Endothelial cell of umbilical vein (primary cell): ENCODE measurements at regions of chr2 and their contacts with region 1.

Region 1: GRCh38 chr2:54106631-54107454 is 8.6 kb upstream of the ACYP2 start:
- DNase-seq: peak; percentile 69
- H3K4me3 ChIP-seq: no peak overlapping the region
- H3K27ac ChIP-seq: no peak overlapping the region
- H3K4me1 ChIP-seq: peaks cover 11% of the 10 kb centered on the region
- H3K27me3 ChIP-seq: no peaks in the 10 kb centered on the region
- CTCF ChIP-seq: peak; percentile 53 to 56
- POLR2A ChIP-seq: no peak

Region 2: DNA sequence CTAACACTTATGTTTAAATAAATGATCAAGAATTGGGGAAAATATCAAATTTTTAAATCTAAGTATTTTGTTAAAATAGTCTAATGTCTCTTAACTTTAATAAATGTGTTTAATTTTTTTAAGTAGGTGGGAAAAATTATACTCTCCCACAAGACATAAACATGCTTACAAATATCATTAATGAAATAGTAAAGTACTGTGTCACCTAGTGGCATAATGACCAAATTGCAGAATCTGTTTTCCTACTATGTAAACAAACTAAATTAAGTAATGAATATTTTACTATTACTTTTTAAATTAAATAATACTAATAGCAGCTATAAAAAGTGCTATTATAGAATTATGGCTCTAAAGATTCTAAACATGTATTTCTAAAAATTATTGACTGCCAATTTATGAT is 391.3 kb before region 1 on chr2:
- CTCF ChIA-PET with region 1: no interaction called
- POLR2A ChIA-PET with region 1: no interaction called
- dilution Hi-C with region 1: no loop called
- intact Hi-C with region 1: no loop called
- DNase-seq: peak; percentile 39
- H3K4me3 ChIP-seq: no peak overlapping the region
- H3K27ac ChIP-seq: no peak overlapping the region
- H3K4me1 ChIP-seq: peaks cover 2% of the 10 kb centered on the region
- H3K27me3 ChIP-seq: no peaks in the 10 kb centered on the region
- CTCF ChIP-seq: peak; percentile 6 to 18
- POLR2A ChIP-seq: no peak

Region 3: DNA sequence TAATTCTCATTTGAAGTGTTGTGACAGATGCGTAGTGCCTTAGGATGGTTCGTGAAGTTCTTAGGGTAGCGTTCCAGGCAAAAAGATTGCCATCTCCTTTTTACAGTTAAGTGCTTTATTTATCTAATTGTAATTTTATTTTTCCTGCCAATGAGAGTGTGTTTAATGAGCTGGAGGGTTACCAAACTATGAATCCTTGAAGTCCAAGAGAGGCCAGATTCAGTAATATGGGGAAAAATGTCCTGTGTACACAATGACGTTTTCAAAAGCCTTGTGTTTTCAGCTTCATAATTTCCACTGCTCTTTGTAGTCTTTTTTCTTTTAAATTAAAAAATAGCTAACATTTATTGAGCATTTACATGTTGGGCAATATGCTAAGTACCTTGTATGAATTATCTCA is 32.4 kb after region 1 on chr2:
- CTCF ChIA-PET with region 1: interaction called, 10 read pairs
- POLR2A ChIA-PET with region 1: no interaction called
- dilution Hi-C with region 1: no loop called
- intact Hi-C with region 1: no loop called
- DNase-seq: no peak
- H3K4me3 ChIP-seq: no peak overlapping the region
- H3K27ac ChIP-seq: no peak overlapping the region
- H3K4me1 ChIP-seq: no peaks in the 10 kb centered on the region
- H3K27me3 ChIP-seq: no peaks in the 10 kb centered on the region
- CTCF ChIP-seq: no peak
- POLR2A ChIP-seq: no peak

Region 4: DNA sequence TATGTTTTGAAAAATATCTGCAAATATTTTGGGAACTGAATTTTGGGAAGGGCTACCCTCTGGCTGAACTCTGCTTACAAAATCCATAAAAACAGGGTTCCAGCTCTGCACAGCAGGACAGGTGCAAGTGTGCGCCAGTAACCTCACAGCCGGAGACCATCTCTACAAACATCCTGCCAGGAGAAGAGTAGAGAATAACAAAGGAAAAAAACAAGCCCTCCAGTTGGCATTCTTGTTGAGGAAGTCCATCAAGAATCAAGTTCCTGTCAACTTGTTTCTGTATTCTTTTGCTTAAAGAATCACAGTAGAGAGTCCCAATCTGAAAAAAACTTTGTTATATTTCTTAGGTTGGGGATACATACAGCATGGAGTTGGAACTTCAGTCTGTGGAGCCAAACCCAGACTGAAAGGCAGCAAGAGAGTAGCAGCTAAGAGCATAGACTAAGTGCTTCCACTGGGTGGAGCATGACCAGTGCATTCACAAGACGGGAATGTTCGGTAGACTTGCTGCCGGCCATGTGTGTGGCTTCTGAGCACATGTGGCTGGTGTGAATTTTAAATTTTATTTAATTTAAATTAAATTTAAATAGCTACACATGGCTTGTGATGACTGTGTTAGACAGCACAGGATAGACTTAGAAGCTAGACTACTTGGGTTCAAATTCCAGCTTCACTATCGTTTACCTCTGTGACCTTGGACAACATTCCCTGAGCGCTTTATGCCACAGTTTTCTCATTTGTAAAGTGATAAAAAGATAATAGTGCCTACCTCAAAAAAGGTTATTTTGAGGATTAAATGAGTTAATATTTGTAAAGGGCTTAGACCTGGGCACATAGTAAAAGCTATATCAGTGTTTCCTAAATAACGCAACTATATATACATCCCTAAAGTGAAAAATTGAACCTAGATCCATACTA is 391.2 kb after region 1 on chr2:
- CTCF ChIA-PET with region 1: interaction called, 50 read pairs
- POLR2A ChIA-PET with region 1: no interaction called
- dilution Hi-C with region 1: no loop called
- intact Hi-C with region 1: loop called (anchors 1 kb)
- DNase-seq: peak; percentile 77
- H3K4me3 ChIP-seq: no peak overlapping the region
- H3K27ac ChIP-seq: no peak overlapping the region
- H3K4me1 ChIP-seq: peaks cover 8% of the 10 kb centered on the region
- H3K27me3 ChIP-seq: no peaks in the 10 kb centered on the region
- CTCF ChIP-seq: peak; percentile 27 to 48
- POLR2A ChIP-seq: no peak

Region 5: GRCh38 chr2:54522624-54523281 is 415.9 kb after region 1 on chr2:
- CTCF ChIA-PET with region 1: interaction called, 20 read pairs
- POLR2A ChIA-PET with region 1: no interaction called
- dilution Hi-C with region 1: no loop called
- intact Hi-C with region 1: no loop called
- DNase-seq: peak; percentile 44
- H3K4me3 ChIP-seq: no peak overlapping the region
- H3K27ac ChIP-seq: no peak overlapping the region
- H3K4me1 ChIP-seq: peaks cover 10% of the 10 kb centered on the region
- H3K27me3 ChIP-seq: no peaks in the 10 kb centered on the region
- CTCF ChIP-seq: peak; percentile 48 to 68
- POLR2A ChIP-seq: no peak

Region 6: GRCh38 chr2:54657664-54658083 is 550.8 kb after region 1 on chr2:
- CTCF ChIA-PET with region 1: interaction called, 23 read pairs
- POLR2A ChIA-PET with region 1: no interaction called
- dilution Hi-C with region 1: no loop called
- intact Hi-C with region 1: no loop called
- DNase-seq: peak; percentile 61
- H3K4me3 ChIP-seq: no peak overlapping the region
- H3K27ac ChIP-seq: no peak overlapping the region
- H3K4me1 ChIP-seq: no peaks in the 10 kb centered on the region
- H3K27me3 ChIP-seq: no peaks in the 10 kb centered on the region
- CTCF ChIP-seq: peak; percentile 42 to 58
- POLR2A ChIP-seq: no peak

Region 7: DNA sequence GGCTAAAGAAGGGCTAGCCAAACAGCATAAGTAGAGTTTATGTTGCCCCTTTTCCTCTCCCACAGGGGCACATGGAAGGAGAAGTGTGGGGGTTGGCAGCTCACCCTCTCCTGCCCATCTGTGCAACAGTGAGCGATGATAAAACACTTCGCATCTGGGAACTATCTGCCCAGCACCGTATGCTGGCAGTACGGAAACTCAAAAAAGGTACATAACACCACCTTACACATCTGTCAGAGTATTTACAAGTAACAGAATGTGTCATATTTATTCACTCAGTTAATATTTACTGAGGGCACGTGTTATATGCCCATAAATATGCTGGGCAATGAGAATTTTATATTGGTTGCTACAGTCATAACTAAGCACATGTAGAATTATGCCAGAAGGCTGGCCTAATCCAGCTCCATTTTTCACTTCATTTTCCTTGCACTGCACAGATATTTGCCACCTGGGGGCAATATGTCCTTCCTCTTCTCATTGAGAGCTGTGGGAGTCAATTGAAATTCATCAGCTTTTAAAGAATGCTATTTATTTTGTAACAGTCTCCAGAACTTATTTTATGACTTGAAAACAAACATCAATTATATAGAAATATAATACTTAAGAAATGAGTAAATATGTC is 792.8 kb after region 1 on chr2:
- CTCF ChIA-PET with region 1: interaction called, 12 read pairs
- POLR2A ChIA-PET with region 1: no interaction called
- dilution Hi-C with region 1: no loop called
- intact Hi-C with region 1: no loop called
- DNase-seq: peak; percentile 48
- H3K4me3 ChIP-seq: no peak overlapping the region
- H3K27ac ChIP-seq: no peak overlapping the region
- H3K4me1 ChIP-seq: peaks cover 10% of the 10 kb centered on the region
- H3K27me3 ChIP-seq: peaks cover 5 to 6% of the 10 kb centered on the region in 2 experiments
- CTCF ChIP-seq: peak; percentile 31 to 34
- POLR2A ChIP-seq: no peak